CD4-positive, alpha-beta memory T cell (primary cell): ENCODE measurements at regions of chr3 and their contacts with region 1.

Region 1: GRCh38 chr3:156151824-156152428 is 31.5 kb downstream of the KCNAB1 start:
- DNase-seq: peak; percentile 40 to 56 (median 45)
- H3K4me3 ChIP-seq: no peak overlapping the region
- H3K4me3 Mint-ChIP-seq: no peak overlapping the region
- H3K27ac ChIP-seq: no peak overlapping the region
- H3K27ac Mint-ChIP-seq: peak overlapping the region in 2 of 7 donors; percentile 31 to 63
- H3K4me1 ChIP-seq: no peaks in the 10 kb centered on the region
- H3K4me1 Mint-ChIP-seq: peaks cover 0 to 1% (median under 1%) of the 10 kb centered on the region in 4 donors
- H3K27me3 ChIP-seq: no peaks in the 10 kb centered on the region
- H3K27me3 Mint-ChIP-seq: peaks cover 0 to 1% of the 10 kb centered on the region in 2 donors

Region 2: DNA sequence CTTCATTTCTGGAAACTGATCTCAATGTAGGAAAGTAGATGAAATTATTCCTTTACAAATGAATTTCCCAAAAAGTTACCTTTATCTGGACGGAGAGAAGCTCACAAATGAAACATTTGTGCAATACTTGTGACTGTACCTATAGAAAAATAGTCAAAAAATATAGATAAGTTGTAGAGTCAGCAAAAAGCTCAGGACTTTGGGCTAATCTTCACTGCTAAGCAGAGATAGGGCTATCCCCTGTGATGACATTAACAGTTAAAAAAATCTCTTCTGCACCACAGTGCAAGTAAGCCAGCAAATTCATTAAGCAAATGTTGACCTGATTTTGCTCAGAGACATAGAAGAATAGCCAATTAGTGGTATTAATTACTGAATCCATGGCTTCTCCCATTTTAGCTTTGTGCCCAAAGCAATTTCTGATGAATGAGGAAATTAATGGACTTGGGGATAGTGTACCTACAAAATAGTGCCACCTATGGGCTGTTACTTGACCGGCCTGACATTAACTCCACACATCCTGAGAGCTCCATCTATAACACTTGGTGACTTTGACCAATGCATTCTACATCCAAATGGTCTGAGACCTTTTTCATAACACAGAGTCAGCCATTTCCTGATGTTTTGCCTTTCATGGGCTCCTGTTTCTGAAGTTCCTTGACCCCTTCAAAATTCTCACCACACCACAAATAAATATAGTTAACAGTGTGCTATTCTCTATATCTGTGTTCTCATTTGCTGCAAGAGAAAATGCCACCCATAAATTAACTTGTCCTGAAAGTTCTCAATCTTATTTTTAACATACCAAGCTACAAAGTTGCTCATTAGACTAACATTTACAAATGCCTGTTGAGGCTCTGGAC is 298.0 kb after region 1 on chr3:
- CTCF ChIA-PET with region 1: interaction called, 13 read pairs
- POLR2A ChIA-PET with region 1: no interaction called
- intact Hi-C with region 1: loop called (anchors 2 kb)
- DNase-seq: peak in 1 of 5 donors; percentile 10
- H3K4me3 ChIP-seq: no peak overlapping the region
- H3K4me3 Mint-ChIP-seq: no peak overlapping the region
- H3K27ac ChIP-seq: no peak overlapping the region
- H3K27ac Mint-ChIP-seq: no peak overlapping the region
- H3K4me1 ChIP-seq: no peaks in the 10 kb centered on the region
- H3K4me1 Mint-ChIP-seq: no peaks in the 10 kb centered on the region
- H3K27me3 ChIP-seq: no peaks in the 10 kb centered on the region
- H3K27me3 Mint-ChIP-seq: peaks cover 2 to 4% of the 10 kb centered on the region in 2 donors

Region 3: GRCh38 chr3:156547637-156548036 is 395.7 kb after region 1 on chr3:
- CTCF ChIA-PET with region 1: interaction called, 78 read pairs
- POLR2A ChIA-PET with region 1: interaction called, 4 read pairs
- intact Hi-C with region 1: no loop called
- DNase-seq: no peak
- H3K4me3 ChIP-seq: no peak overlapping the region
- H3K4me3 Mint-ChIP-seq: no peak overlapping the region
- H3K27ac ChIP-seq: no peak overlapping the region
- H3K27ac Mint-ChIP-seq: peak overlapping the region in 3 of 7 donors; percentile 20 to 84 (median 40)
- H3K4me1 ChIP-seq: peaks cover 20% of the 10 kb centered on the region
- H3K4me1 Mint-ChIP-seq: peaks cover 32 to 53% (median 43%) of the 10 kb centered on the region in 4 donors
- H3K27me3 ChIP-seq: no peaks in the 10 kb centered on the region
- H3K27me3 Mint-ChIP-seq: no peaks in the 10 kb centered on the region

Region 4: DNA sequence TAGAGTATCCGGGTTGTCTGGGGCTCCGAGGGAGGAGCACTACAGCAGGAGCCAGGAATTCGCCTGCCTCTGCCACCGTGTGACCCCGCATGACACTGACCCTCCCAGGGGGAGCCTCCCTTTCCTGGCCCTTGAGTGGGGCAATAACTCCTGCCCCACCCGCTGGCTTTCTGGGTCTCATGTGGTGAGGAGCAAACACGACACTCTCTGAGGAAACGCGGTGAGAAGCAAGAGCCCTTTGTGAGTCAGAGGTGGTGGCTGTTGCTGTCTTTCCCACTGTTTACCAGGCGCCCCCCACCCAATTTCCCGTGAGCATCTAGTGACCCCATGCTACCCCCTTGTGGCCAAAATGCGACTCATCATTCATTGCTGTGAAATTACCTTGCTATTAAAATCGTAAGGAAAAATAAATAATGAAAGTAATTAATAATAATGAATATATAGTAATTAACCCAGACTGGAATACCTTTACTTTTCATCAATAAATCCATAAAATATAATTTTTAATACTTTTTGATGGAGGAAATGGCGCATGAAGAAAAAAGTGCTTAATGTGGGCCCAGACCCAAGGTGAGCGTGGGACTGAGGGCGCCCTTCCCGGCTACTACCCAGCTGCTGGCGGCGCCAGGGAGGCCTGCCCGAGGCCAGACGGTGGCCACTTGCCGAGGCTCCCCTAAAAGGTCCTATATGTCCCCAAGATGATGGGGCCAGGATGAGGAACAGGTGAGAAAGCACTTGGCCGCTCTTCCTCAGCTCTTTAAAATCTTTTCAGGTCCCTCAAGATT is 978.7 kb after region 1 on chr3:
- CTCF ChIA-PET with region 1: interaction called, 9 read pairs
- POLR2A ChIA-PET with region 1: no interaction called
- intact Hi-C with region 1: loop called (anchors 1 kb)
- DNase-seq: peak; percentile 81 to 94 (median 84)
- H3K4me3 ChIP-seq: peak overlapping the region; percentile 4 to 45
- H3K4me3 Mint-ChIP-seq: peak overlapping the region; percentile 50 to 91 (median 76)
- H3K27ac ChIP-seq: peak overlapping the region; percentile 83
- H3K27ac Mint-ChIP-seq: peak overlapping the region; percentile 95 to 99 (median 97)
- H3K4me1 ChIP-seq: peaks cover 73% of the 10 kb centered on the region
- H3K4me1 Mint-ChIP-seq: peaks cover 48 to 86% (median 66%) of the 10 kb centered on the region in 4 donors
- H3K27me3 ChIP-seq: no peaks in the 10 kb centered on the region
- H3K27me3 Mint-ChIP-seq: no peaks in the 10 kb centered on the region

Region 5: GRCh38 chr3:157239082-157239704 is 1087.3 kb after region 1 on chr3:
- CTCF ChIA-PET with region 1: interaction called, 5 read pairs
- POLR2A ChIA-PET with region 1: no interaction called
- intact Hi-C with region 1: loop called (anchors 1 kb)
- DNase-seq: peak; percentile 55 to 70 (median 65)
- H3K4me3 ChIP-seq: no peak overlapping the region
- H3K4me3 Mint-ChIP-seq: no peak overlapping the region
- H3K27ac ChIP-seq: no peak overlapping the region
- H3K27ac Mint-ChIP-seq: peak overlapping the region in 2 of 7 donors; percentile 29 to 32
- H3K4me1 ChIP-seq: no peaks in the 10 kb centered on the region
- H3K4me1 Mint-ChIP-seq: peaks cover 0 to 5% (median 3%) of the 10 kb centered on the region in 4 donors
- H3K27me3 ChIP-seq: no peaks in the 10 kb centered on the region
- H3K27me3 Mint-ChIP-seq: peaks cover 1 to 4% of the 10 kb centered on the region in 2 donors